IMR-90 (cell line): ENCODE measurements at regions of chr5 and their contacts with region 1.

Region 1: DNA sequence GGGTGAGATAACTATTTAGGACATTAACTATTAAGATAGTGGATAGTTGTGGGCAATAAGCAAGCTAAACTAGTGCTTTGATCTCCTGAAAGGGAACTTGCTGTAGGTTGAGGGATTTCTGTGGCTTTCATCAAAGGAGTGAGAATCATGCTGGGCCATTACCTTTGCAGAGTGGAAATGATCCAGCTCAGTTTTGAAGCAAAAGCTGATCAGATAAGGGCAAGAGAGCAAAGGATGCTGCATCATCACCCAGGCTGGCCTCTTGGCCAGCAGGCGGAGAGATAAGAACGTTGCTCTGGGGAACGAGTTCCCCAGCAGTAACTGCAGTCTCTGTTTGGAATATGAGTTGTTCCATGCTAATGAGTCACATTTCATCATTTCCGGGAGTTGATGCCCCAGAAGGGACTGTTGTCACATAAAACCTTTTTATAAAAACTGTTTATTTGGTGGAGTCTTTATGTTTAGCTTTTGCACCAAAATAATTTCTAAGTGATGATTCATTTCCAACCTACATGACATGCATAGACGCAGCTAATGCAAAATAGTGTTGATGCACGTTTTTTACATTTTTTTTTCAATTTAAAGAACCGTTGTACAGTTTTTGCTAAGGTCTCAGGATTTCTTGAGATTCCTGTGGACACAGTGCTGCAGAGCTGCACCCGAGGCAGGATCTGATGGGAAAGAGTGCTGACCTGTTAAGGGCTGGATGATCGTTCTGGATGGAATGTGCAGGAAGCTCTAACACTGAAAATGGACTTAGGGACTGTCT is 99.3 kb downstream of the ACTBL2 start:
- DNase-seq: peak; percentile 99
- ATAC-seq: peak; percentile 93
- H3K4me3 ChIP-seq: no peak overlapping the region
- H3K27ac ChIP-seq: peak overlapping the region; percentile 94
- H3K4me1 ChIP-seq: peaks cover 8% of the 10 kb centered on the region
- H3K27me3 ChIP-seq: no peaks in the 10 kb centered on the region
- CTCF ChIP-seq: peak; percentile 59
- POLR2A ChIP-seq: no peak
- RAD21 ChIP-seq: peak; percentile 66

Region 2: GRCh38 chr5:57193757-57194413 is 189.4 kb before region 1 on chr5:
- CTCF ChIA-PET with region 1: no interaction called
- POLR2A ChIA-PET with region 1: no interaction called
- dilution Hi-C with region 1: no loop called
- in situ Hi-C with region 1: no loop called
- intact Hi-C with region 1: no loop called
- DNase-seq: no peak
- ATAC-seq: no peak
- H3K4me3 ChIP-seq: no peak overlapping the region
- H3K27ac ChIP-seq: no peak overlapping the region
- H3K4me1 ChIP-seq: peaks cover 3% of the 10 kb centered on the region; the same call in 1 of the 2 replicates
- H3K27me3 ChIP-seq: no peaks in the 10 kb centered on the region
- CTCF ChIP-seq: no peak
- POLR2A ChIP-seq: no peak
- RAD21 ChIP-seq: no peak

Region 3: DNA sequence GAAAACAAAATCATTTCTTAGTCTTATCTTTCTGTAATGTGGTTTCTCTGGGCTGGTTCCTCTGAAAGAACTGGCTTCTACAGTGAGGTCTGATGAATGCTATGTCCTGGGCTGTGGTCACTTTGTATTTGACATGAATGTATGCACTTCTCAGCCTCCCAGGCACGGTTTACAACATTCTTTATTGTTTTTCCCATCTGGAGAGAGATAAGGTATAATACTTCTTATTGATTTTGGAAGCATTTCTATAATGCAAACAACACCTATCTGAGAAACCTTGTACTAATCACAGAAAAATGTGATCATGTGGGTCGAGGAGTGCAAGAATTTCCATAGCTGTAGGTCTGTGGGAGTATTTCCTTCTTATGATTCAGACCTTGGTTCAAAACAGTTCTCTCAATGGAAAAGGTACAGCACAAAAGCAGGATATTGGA is 52.4 kb after region 1 on chr5:
- CTCF ChIA-PET with region 1: no interaction called
- POLR2A ChIA-PET with region 1: no interaction called
- dilution Hi-C with region 1: no loop called
- in situ Hi-C with region 1: no loop called
- intact Hi-C with region 1: loop called (anchors 5 kb)
- DNase-seq: peak; percentile 99
- ATAC-seq: peak; percentile 77
- H3K4me3 ChIP-seq: no peak overlapping the region
- H3K27ac ChIP-seq: peak overlapping the region; percentile 91; the same call in 1 of the 2 replicates
- H3K4me1 ChIP-seq: peaks cover 28% of the 10 kb centered on the region
- H3K27me3 ChIP-seq: no peaks in the 10 kb centered on the region
- CTCF ChIP-seq: no peak
- POLR2A ChIP-seq: no peak
- RAD21 ChIP-seq: peak; percentile 3; the same call in 1 of the 2 replicates

Region 4: GRCh38 chr5:57494104-57495098 is 111.1 kb after region 1 on chr5:
- CTCF ChIA-PET with region 1: interaction called, 11 read pairs
- POLR2A ChIA-PET with region 1: no interaction called
- dilution Hi-C with region 1: no loop called
- in situ Hi-C with region 1: no loop called
- intact Hi-C with region 1: loop called (anchors 2 kb)
- DNase-seq: peak; percentile 98
- ATAC-seq: peak; percentile 97
- H3K4me3 ChIP-seq: no peak overlapping the region
- H3K27ac ChIP-seq: peak overlapping the region; percentile 88
- H3K4me1 ChIP-seq: peaks cover 16% of the 10 kb centered on the region
- H3K27me3 ChIP-seq: no peaks in the 10 kb centered on the region
- CTCF ChIP-seq: no peak
- POLR2A ChIP-seq: no peak
- RAD21 ChIP-seq: peak; percentile 43